OCI-LY7 (cell line): ENCODE measurements at regions of chr3 and their contacts with region 1.

Region 1: GRCh38 chr3:42600111-42600988 is at the start of gene NKTR:
- DNase-seq: peak; percentile 99
- H3K4me3 ChIP-seq: peak within 1 kb of the TSS; percentile 78
- H3K27ac ChIP-seq: peak within 1 kb of the TSS; percentile 93
- H3K4me1 ChIP-seq: peaks cover 32% of the 10 kb centered on the region
- CTCF ChIP-seq: no peak
- total RNA-seq, gene NKTR: 85.1 and 90.2 TPM in 2 replicates

Region 2: DNA sequence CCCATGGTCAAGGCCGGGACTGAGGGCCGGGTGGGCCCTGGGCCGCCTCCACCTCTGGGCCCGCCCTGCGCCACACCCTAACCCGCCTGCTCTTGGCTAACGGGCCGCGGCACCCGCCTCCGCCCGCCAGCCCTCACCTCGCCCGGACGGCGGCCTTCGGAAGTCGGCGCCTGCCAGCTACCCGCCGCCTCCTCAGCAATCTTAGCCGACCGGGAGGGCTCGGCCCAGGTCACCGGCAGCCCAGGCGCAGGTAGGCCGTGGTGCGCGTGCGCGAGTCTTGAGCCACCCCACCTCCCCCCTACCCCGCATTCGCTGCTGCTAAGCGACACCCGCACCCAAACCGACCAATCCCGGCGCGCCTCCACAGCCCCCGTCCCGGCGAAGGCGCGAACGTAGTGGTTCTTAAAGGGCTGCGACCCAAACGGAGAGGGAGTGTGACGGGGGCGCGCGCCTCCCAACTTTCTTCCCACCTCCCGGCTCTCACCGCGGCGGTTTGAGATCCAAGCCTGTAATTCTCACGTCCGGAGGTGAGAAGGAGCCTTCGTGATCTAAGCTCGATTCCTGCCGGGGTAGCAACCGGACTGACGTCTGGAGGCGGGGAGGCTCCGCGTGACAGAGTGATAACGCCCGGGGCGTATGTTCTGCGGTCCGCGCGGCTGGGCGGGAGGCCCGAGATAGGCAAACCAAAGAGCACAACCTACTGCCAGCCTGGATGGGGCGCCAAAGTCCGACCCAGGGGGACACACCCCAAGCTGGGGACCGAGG is 18.5 kb before region 1 on chr3 and contains the start of gene SEC22C:
- CTCF ChIA-PET with region 1: interaction called, 6 read pairs
- POLR2A ChIA-PET with region 1: interaction called, 33 read pairs
- intact Hi-C with region 1: loop called (anchors 1 kb)
- DNase-seq: peak; percentile 96
- H3K4me3 ChIP-seq: peak within 1 kb of the TSS; percentile 94
- H3K27ac ChIP-seq: peak within 1 kb of the TSS; percentile 74
- H3K4me1 ChIP-seq: peaks cover 27% of the 10 kb centered on the region
- CTCF ChIP-seq: peak; percentile 77
- total RNA-seq, gene SEC22C: 30.0 and 33.0 TPM in 2 replicates

Region 3: DNA sequence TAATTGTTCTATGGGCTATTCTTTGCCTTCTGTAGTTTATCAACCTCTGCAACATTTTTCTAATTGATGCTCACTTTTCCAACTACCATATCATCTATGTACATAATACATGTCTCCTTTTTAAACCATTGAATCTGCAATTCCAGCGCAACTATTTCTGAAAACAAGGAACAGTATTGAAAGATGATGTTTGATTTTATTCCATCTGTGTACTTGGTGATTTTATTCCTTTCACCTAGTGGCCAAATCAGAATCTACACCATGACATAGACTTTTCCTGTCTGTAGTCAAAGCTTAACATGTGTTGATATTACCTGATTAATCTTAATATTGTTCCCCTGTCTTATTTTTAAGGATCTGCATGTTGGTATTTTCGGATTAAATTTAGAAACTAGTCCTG is 13.1 kb after region 1 on chr3:
- CTCF ChIA-PET with region 1: interaction called, 4 read pairs
- POLR2A ChIA-PET with region 1: interaction called, 15 read pairs
- intact Hi-C with region 1: no loop called
- DNase-seq: peak; percentile 14
- H3K4me3 ChIP-seq: no peak overlapping the region
- H3K27ac ChIP-seq: peak overlapping the region; percentile 54
- H3K4me1 ChIP-seq: peaks cover 38% of the 10 kb centered on the region
- CTCF ChIP-seq: peak; percentile 83